ENCODE measurements at regions of chr1 and their contacts with region 1.

Region 1: DNA sequence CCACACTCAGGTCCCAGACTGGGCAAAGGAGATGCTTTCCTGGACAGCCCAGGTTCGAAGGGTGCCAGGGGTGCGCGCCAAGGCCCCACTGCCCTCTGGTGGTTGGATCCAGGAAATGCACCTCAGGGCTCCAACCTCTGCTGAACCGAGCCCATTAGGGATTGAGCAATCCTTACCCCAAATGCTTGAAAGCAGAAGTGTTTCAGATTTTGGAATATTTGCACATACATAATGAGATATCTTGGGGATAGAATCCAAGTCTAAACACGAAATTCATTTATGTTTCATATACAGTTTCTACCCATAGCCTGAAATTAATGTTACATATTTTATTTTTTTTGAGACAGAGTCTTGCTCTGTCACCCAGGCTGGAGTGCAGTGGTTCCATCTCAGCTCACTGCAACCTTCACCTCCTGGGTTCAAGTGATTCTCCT is 57.4 kb downstream of the SLC9A1 start:
- DNase-seq: peak; percentile 58
- ATAC-seq: peak; percentile 74
- H3K4me3 ChIP-seq: no peak overlapping the region
- H3K27ac ChIP-seq: no peak overlapping the region
- H3K4me1 ChIP-seq: peaks cover 29% of the 10 kb centered on the region
- H3K27me3 ChIP-seq: peaks cover 0 to 13% of the 10 kb centered on the region in 2 experiments; a peak in 2 of 5 replicates
- CTCF ChIP-seq: peak; percentile 94
- EP300 ChIP-seq: no peak
- POLR2A ChIP-seq: no peak
- RAD21 ChIP-seq: peak; percentile 87

Region 2: GRCh38 chr1:26959722-26960615 is 137.5 kb before region 1 on chr1 and contains the start of gene KDF1:
- CTCF ChIA-PET with region 1: no interaction called
- POLR2A ChIA-PET with region 1: no interaction called
- in situ Hi-C with region 1: loop called (anchors 5 kb)
- intact Hi-C with region 1: loop called (anchors 10 kb)
- DNase-seq: no peak
- ATAC-seq: peak; percentile 76
- H3K4me3 ChIP-seq: peak within 1 kb of the TSS; percentile 82 to 93 (median 88)
- H3K27ac ChIP-seq: peak within 1 kb of the TSS; percentile 6
- H3K4me1 ChIP-seq: peaks cover 66% of the 10 kb centered on the region
- H3K27me3 ChIP-seq: no peaks in the 10 kb centered on the region; a peak in 1 of 5 replicates
- CTCF ChIP-seq: peak; percentile 48; the same call in 1 of the 2 replicates
- EP300 ChIP-seq: no peak
- POLR2A ChIP-seq: 0 out of 4 replicates have a peak, but pooled peaks of 1 of the 2 experiments have one; percentile 11
- RAD21 ChIP-seq: no peak; the same call in 1 of the 2 replicates
- total RNA-seq, gene KDF1: 1.9 and 2.4 TPM in 2 replicates

Region 3: GRCh38 chr1:26965213-26965612 is 132.3 kb before region 1 on chr1:
- CTCF ChIA-PET with region 1: no interaction called
- POLR2A ChIA-PET with region 1: no interaction called
- in situ Hi-C with region 1: loop called (anchors 5 kb)
- intact Hi-C with region 1: loop called (anchors 10 kb)
- DNase-seq: no peak
- ATAC-seq: no peak
- H3K4me3 ChIP-seq: no peak overlapping the region
- H3K27ac ChIP-seq: no peak overlapping the region
- H3K4me1 ChIP-seq: peaks cover 96% of the 10 kb centered on the region
- H3K27me3 ChIP-seq: 0 out of 5 replicates have a peak, but pooled peaks cover 0 to 4% of the 10 kb centered on the region in 2 experiments
- CTCF ChIP-seq: no peak
- EP300 ChIP-seq: no peak
- POLR2A ChIP-seq: no peak
- RAD21 ChIP-seq: no peak

Region 4: DNA sequence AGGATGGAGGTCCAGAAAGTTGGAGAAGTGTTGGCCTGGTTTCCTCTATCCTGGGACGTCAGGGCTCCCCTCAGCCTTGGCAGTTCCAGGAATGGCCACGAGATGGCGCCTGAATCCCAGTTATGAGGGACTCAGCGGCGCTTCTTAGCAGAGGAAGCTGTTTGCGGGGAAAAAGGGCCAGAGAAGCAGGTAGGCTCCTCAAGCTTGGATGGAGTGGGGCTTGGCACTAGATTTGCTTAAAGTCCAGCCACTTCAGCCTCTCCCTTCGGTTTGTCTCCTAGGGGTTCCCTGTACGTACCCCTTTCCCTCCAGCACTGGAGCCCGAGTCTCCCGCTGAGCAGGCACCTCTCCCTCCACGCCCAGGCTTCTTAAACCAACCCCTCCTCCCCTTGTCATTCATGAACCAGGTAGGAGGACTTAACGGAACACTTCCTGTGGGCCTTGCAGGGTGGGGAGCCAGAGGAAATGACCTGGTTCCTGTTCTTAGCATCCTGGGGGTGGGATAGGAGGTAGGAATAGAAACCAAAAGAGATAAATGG is 52.8 kb before region 1 on chr1:
- CTCF ChIA-PET with region 1: interaction called, 95 read pairs
- POLR2A ChIA-PET with region 1: interaction called, 5 read pairs
- in situ Hi-C with region 1: loop called (anchors 5 kb)
- intact Hi-C with region 1: loop called (anchors 1 kb)
- DNase-seq: peak; percentile 62
- ATAC-seq: peak; percentile 87
- H3K4me3 ChIP-seq: no peak overlapping the region
- H3K27ac ChIP-seq: no peak overlapping the region
- H3K4me1 ChIP-seq: peaks cover 8% of the 10 kb centered on the region; the same call in 1 of the 2 replicates
- H3K27me3 ChIP-seq: peaks cover 6 to 40% of the 10 kb centered on the region in 2 experiments; a peak in 4 of 5 replicates
- CTCF ChIP-seq: peak; percentile 95
- EP300 ChIP-seq: no peak
- POLR2A ChIP-seq: no peak
- RAD21 ChIP-seq: peak; percentile 89

Region 5: DNA sequence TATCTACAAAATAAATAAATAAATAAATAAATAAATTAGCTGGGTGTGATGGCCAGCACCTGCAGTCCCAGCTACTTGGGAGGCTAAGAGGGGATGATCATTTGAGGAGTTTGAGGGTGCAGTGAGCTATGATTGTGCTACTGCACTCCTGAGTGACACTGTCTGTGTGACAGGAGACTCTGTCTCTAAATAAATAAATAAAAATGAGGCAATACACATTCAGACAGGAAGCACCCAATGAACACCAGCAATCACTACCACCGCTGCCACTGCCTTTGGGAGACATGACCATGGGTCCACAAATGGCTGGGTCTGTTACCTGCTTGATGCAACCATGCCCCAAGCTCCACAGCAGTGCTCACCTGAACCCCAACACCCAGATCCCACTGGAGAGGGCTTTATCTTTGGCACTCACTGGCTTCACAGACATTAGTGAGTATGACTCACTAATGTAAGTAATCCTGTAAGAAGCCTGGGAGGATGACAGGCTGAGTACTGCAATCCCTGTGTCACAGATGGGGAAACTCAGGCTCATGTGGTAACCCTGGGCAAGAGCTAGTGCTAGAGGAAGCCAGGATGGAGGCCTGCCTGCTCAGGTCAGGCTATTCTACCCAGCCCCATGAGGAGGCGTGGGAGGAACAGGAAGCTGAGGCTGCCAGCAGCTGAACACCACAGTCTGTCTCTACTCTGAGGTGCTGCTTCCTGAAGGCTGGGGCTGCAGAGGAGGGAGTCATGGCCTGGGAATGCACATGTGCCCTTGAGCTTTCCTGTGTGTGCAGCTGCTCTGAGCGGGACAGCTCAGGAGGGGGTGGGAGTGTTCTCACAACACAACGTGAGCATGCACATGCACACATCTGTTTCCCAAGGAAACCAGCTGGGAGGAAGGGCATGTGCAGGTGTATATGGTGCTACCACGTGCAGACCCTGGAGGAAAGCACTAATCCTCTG is 14.4 kb after region 1 on chr1:
- CTCF ChIA-PET with region 1: no interaction called
- POLR2A ChIA-PET with region 1: no interaction called
- in situ Hi-C with region 1: no loop called
- intact Hi-C with region 1: no loop called
- DNase-seq: peak; percentile 73
- ATAC-seq: peak; percentile 84
- H3K4me3 ChIP-seq: no peak overlapping the region
- H3K27ac ChIP-seq: no peak overlapping the region
- H3K4me1 ChIP-seq: peaks cover 24% of the 10 kb centered on the region
- H3K27me3 ChIP-seq: no peaks in the 10 kb centered on the region
- CTCF ChIP-seq: peak; percentile 62
- EP300 ChIP-seq: no peak
- POLR2A ChIP-seq: no peak
- RAD21 ChIP-seq: peak; percentile 35; the same call in 1 of the 2 replicates